WTC11 (cell line): ENCODE measurements at regions of chr10 and their contacts with region 1.

Region 1: GRCh38 chr10:62038609-62039190 is 137.2 kb downstream of the ARID5B start:
- DNase-seq: peak; percentile 60
- ATAC-seq: peak; percentile 43
- H3K4me3 Mint-ChIP-seq: no peak overlapping the region
- H3K27ac Mint-ChIP-seq: no peak overlapping the region
- H3K4me1 Mint-ChIP-seq: peaks cover 47% of the 10 kb centered on the region
- H3K27me3 Mint-ChIP-seq: peaks cover 43% of the 10 kb centered on the region
- CTCF ChIP-seq: peak; percentile 23

Region 2: DNA sequence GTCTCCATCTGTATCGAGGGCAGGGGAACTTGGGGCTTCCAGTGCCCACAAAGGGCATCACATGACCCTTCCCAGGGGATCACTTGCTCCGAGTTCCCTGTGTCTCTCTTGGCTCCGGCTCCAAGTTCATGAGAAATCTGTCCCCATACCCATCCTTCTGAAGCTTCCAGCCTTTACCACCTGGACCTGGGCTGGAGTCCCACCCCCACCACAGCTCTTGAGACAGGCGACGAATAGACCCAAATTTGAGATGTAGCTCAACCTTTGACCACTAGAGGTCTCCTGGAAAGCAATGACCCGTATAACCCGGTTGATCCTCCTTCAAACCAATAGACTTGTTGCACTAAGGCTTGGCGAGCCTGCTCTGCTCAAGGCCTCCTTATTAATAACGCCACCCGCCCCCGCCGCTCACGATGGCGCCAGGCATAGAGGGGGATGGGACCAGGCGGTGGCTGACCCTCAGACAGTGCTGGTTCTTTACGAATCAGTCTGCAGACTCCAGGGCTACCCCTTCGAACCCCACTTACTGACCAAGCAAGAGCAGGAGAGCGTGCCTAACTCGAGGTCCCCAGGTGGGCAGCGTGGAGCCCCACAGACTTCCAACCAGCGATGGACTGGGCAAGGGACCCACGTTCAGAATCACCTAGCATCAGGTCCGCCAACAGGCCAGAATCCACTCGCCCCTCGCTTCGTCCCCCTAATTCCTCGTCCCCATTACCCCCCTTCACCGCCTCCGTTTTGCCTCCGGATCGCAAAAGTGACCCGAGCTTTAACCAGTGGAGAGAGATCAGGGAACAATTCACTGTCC is 141.6 kb before region 1 on chr10:
- CTCF ChIA-PET with region 1: interaction called, 27 read pairs
- POLR2A ChIA-PET with region 1: no interaction called
- DNase-seq: peak; percentile 58
- ATAC-seq: peak; percentile 92
- H3K4me3 Mint-ChIP-seq: peak overlapping the region; percentile 85
- H3K27ac Mint-ChIP-seq: no peak overlapping the region
- H3K4me1 Mint-ChIP-seq: peaks cover 31% of the 10 kb centered on the region
- H3K27me3 Mint-ChIP-seq: peaks cover 41% of the 10 kb centered on the region
- CTCF ChIP-seq: peak; percentile 58

Region 3: GRCh38 chr10:62019013-62019684 is 19.6 kb before region 1 on chr10:
- CTCF ChIA-PET with region 1: interaction called, 11 read pairs
- POLR2A ChIA-PET with region 1: no interaction called
- DNase-seq: no peak
- ATAC-seq: no peak
- H3K4me3 Mint-ChIP-seq: no peak overlapping the region
- H3K27ac Mint-ChIP-seq: no peak overlapping the region
- H3K4me1 Mint-ChIP-seq: peaks cover 39% of the 10 kb centered on the region
- H3K27me3 Mint-ChIP-seq: peaks cover 19% of the 10 kb centered on the region
- CTCF ChIP-seq: no peak

Region 4: DNA sequence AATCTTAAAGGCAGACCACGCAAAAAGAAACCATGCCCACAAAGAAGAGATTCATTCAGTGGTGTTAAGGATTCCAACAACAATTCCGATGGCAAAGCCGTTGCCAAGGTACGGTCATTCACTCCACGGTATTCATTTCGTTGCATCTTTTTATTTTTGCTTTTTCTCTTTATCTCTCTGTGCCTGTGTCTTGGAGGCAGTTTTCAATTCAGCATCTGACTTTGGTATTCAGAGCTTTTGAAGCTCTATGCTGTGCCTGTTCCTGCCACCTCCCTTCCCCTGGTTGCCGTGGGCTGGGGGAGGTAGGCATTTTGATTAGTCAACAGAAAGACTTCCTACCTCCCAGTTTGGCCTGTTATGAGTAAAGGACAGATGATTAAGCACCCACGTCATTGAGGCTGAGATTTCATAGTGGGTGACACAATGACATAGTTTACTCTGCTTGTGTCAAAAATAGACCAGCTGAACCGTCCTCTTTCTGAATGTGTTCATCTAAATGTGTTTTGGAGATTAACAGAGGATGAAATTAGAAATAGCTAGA is 12.3 kb after region 1 on chr10:
- CTCF ChIA-PET with region 1: interaction called, 25 read pairs
- POLR2A ChIA-PET with region 1: interaction called, 7 read pairs
- DNase-seq: no peak
- ATAC-seq: peak; percentile 8; the same call in 1 of the 2 replicates
- H3K4me3 Mint-ChIP-seq: no peak overlapping the region
- H3K27ac Mint-ChIP-seq: no peak overlapping the region; the same call in 1 of the 2 replicates
- H3K4me1 Mint-ChIP-seq: peaks cover 58% of the 10 kb centered on the region
- H3K27me3 Mint-ChIP-seq: no peaks in the 10 kb centered on the region; the same call in 1 of the 2 replicates
- CTCF ChIP-seq: no peak

Region 5: DNA sequence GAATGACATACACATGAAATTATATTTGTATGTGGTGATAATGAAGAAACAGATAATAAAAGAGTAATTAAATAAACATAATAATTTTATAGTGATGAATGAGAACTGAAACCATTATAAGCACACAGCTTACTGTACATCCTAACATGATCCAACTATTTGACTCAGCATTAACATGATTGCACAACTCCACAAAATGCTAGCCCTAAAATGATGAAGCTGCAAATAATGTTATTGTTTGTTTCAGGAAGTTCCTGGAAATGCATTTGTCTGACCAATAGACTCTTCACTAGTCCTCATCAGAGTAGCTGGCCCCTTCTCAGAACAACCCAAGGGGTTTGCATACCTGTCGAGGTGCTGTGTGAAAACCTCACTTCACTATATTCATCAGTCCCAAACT is 114.5 kb after region 1 on chr10:
- CTCF ChIA-PET with region 1: no interaction called
- POLR2A ChIA-PET with region 1: no interaction called
- DNase-seq: no peak
- ATAC-seq: no peak
- H3K4me3 Mint-ChIP-seq: no peak overlapping the region
- H3K27ac Mint-ChIP-seq: no peak overlapping the region
- H3K4me1 Mint-ChIP-seq: no peaks in the 10 kb centered on the region
- H3K27me3 Mint-ChIP-seq: no peaks in the 10 kb centered on the region
- CTCF ChIP-seq: no peak

Region 6: DNA sequence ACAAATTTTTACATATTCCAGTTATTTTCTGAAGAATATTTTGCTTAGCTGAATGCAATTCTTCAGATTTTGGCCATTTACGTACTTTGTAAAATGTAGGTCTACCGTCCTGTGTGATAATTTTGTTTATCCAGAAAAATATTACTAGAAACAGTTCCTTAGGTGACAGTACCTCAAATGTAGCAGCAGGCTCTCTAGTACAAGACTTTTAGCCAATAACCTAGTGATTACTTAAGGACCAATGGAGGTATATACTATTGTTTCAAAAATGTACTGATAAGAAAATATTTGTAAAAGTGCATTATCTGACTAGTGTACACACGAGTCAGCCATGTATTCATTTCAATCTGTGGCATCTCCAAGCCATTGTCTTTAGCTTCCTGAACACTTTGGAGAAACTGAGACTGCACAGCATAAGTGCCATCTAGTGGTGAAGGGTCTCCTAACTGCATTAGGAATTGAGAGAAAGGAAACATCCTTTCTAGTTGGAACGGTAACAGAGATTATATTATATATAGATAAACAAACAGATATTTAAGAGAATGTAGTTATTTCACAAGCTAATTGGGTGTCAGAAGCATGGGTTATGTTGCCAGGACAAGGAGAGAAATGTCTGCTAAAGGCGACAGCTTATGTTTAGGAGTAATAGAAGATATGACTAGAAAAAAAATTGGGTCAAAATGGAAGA is 206.2 kb after region 1 on chr10:
- CTCF ChIA-PET with region 1: interaction called, 31 read pairs
- POLR2A ChIA-PET with region 1: no interaction called
- DNase-seq: no peak
- ATAC-seq: peak; percentile 51
- H3K4me3 Mint-ChIP-seq: no peak overlapping the region
- H3K27ac Mint-ChIP-seq: peak overlapping the region; percentile 49; the same call in 1 of the 2 replicates
- H3K4me1 Mint-ChIP-seq: peaks cover 7% of the 10 kb centered on the region
- H3K27me3 Mint-ChIP-seq: no peaks in the 10 kb centered on the region
- CTCF ChIP-seq: peak; percentile 41